ENCODE measurements at regions of chr17 and their contacts with region 1.

Region 1: GRCh38 chr17:48131216-48131824 is 23.8 kb downstream of the SNX11 start:
- DNase-seq: peak in 4 of 10 donors; percentile 48 to 69 (median 50)

Region 2: GRCh38 chr17:47970704-47971463 is 160.4 kb before region 1 on chr17 and contains the start of gene CDK5RAP3:
- intact Hi-C with region 1: loop called (anchors 5 kb)
- DNase-seq: peak; percentile 99 to 100 (median 100)

Region 3: GRCh38 chr17:48024937-48025906 is 106.1 kb before region 1 on chr17:
- intact Hi-C with region 1: loop called (anchors 1 kb)
- DNase-seq: peak; percentile 97 to 100 (median 98)

Region 4: GRCh38 chr17:48054238-48055185 is 76.8 kb before region 1 on chr17:
- intact Hi-C with region 1: no loop called
- DNase-seq: peak; percentile 53 to 98 (median 86)

Region 5: GRCh38 chr17:48084932-48085444 is 46.3 kb before region 1 on chr17:
- intact Hi-C with region 1: loop called (anchors 5 kb)
- DNase-seq: no peak